ENCODE measurements at regions of chr1 and their contacts with region 1.

Region 1: GRCh38 chr1:218925777-218926176 is 247.9 kb upstream of the LYPLAL1 start:
- DNase-seq: no peak
- H3K4me3 Mint-ChIP-seq: no peak overlapping the region
- H3K27ac Mint-ChIP-seq: no peak overlapping the region
- H3K4me1 Mint-ChIP-seq: peaks cover 8% of the 10 kb centered on the region
- H3K27me3 Mint-ChIP-seq: no peaks in the 10 kb centered on the region
- CTCF ChIP-seq: no peak

Region 2: DNA sequence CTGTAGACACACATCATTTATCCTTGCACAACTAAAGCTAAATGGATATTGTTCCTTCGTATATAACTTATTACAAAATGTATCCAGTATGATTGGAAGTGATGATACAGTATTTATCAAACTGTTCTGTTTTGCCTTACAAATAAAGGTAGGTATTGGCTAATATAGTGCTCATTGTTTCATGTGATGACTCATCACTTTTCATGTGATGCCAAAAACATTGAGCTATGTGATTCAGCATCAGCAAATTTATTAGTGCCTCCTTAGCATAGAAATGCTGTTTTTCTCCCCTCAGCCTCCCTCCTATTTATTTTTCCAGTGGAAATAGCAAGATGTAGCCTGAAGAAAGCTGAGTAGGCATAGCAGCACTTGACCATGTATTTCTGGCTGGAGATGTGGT is 19.3 kb after region 1 on chr1:
- CTCF ChIA-PET with region 1: interaction called, 12 read pairs
- POLR2A ChIA-PET with region 1: interaction called, 7 read pairs
- intact Hi-C with region 1: no loop called
- DNase-seq: peak; percentile 92
- H3K4me3 Mint-ChIP-seq: no peak overlapping the region
- H3K27ac Mint-ChIP-seq: no peak overlapping the region
- H3K4me1 Mint-ChIP-seq: no peaks in the 10 kb centered on the region
- H3K27me3 Mint-ChIP-seq: no peaks in the 10 kb centered on the region
- CTCF ChIP-seq: no peak